ENCODE measurements at regions of chr1 and their contacts with region 1.

Region 1: GRCh38 chr1:248825909-248826760 is at the start of gene SH3BP5L:
- DNase-seq: peak; percentile 92 to 96
- ATAC-seq: peak; percentile 95 to 98 (median 96)
- H3K4me3 ChIP-seq: peak within 1 kb of the TSS; percentile 32 to 83 (median 62)
- H3K27ac ChIP-seq: peak within 1 kb of the TSS; percentile 90 to 98 (median 93)
- H3K4me1 ChIP-seq: peaks cover 26 to 65% (median 52%) of the 10 kb centered on the region in 9 donors
- H3K27me3 ChIP-seq: no peaks in the 10 kb centered on the region
- CTCF ChIP-seq: peak; percentile 14 to 87 (median 67)
- total RNA-seq, gene SH3BP5L: 14.9 to 26.2 (median 18.0) TPM

Region 2: DNA sequence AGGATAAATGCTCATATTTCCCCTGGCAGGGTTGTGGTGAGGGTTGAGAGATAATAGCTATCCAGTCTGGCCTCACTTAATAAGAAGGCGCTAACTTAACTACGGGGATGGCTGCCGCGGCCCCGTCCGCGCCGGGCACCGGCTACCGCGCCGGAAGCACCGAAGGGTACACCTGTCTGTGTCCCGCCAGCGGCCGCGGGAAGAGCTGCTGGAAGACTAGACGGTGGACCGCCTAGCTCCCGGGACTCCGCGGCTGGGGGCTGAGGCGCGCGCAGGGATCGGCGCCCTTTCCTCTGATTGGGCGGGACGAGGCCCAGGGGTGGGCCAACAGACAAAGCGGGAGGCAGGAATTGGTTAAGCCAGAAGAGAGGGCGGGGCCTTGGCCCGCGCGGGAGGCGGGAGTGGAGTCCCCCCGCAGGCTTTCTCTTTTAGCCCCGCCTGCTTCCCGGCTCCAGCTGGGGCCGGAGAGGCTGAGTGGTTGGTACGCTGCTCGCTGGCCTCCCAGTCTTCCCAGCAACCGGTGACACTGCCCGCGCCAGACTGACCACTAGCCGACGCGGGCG is 11.7 kb after region 1 on chr1 and contains the start of gene ZNF672:
- intact Hi-C with region 1: loop called in 2 of 10 experiments (anchors 1 kb)
- DNase-seq: peak; percentile 98 to 99
- ATAC-seq: peak; percentile 92 to 97 (median 94)
- H3K4me3 ChIP-seq: peak within 1 kb of the TSS; percentile 74 to 97 (median 88)
- H3K27ac ChIP-seq: peak within 1 kb of the TSS; percentile 98 to 100 (median 100)
- H3K4me1 ChIP-seq: peaks cover 11 to 55% (median 42%) of the 10 kb centered on the region in 9 donors
- H3K27me3 ChIP-seq: no peaks in the 10 kb centered on the region
- CTCF ChIP-seq: no peak
- total RNA-seq, gene ZNF672: 31.9 to 44.4 (median 37.3) TPM

Region 3: DNA sequence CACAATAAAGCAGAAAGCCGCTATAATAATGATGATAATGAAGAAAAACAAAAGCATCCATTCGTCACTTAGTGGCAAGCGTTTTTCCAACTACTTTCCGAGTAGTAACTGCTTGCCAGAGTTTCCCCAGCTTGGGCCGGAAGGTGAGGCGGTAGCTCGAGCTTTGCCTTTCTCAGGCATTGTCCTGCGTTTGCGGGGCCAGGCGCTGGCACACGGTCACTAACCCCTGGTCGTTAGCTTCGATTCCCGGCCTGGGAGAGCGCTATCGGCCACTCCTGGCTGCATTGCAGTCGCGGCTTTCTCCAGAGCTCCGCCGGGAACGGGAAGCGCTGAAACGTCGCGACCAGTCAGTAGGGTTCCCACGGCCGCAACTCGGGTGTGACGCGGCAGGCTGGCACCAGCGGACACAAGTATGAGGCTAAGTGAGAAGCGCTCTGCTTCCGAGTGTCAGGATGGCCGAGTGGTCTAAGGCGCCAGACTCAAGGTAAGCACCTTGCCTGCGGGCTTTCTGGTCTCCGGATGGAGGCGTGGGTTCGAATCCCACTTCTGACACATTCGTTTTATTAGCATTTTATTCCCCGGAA is 47.4 kb after region 1 on chr1:
- intact Hi-C with region 1: loop called in 1 of 10 experiments (anchors 1 kb)
- DNase-seq: peak; percentile 91 to 95
- ATAC-seq: peak; percentile 93 to 97 (median 96)
- H3K4me3 ChIP-seq: peak overlapping the region; percentile 34 to 81 (median 70)
- H3K27ac ChIP-seq: peak overlapping the region; percentile 74 to 98 (median 93)
- H3K4me1 ChIP-seq: peaks cover 0 to 12% (median 3%) of the 10 kb centered on the region in 9 donors
- H3K27me3 ChIP-seq: no peaks in the 10 kb centered on the region
- CTCF ChIP-seq: no peak